ENCODE measurements at regions of chr3 and their contacts with region 1.

Region 1: DNA sequence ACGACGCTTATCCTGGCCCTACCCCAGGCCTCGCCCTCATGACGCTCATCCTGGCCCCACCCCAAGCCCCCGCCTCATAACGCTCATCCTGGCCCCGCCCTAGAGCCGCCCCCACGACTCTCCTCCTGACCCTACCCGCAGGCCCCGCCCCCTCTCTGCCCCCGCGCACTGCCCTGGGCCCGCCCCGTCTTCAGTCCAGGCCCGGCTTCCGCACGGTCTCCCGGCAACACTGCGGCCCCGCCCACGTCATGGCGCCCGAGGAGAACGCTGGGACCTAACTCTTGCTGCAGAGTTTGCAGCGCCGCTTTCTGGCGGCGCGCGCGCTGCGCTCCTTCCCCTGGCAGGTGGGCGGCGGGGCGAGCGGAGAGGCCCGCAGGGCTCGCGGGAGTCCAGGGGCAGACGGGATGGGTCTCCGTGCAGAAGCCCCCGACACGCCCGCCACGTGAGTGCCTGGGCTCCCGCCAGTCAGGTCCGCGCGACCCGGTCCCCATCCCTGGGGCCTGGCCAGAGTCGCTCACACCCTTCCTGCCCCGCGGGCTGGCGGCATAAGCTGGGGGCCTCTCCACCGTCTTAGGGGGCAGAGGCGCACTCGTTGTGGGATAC is 52.5 kb upstream of the ROPN1B start:
- DNase-seq: peak in 1 of 2 donors; percentile 99
- ATAC-seq: peak; percentile 95 to 100 (median 100)
- H3K4me3 ChIP-seq: peak overlapping the region; percentile 53 to 97 (median 80)
- H3K27ac ChIP-seq: peak overlapping the region in 9 of 10 donors; percentile 71 to 93 (median 86)
- H3K4me1 ChIP-seq: peaks cover 0 to 17% (median 8%) of the 10 kb centered on the region in 9 donors
- H3K27me3 ChIP-seq: no peaks in the 10 kb centered on the region
- CTCF ChIP-seq: peak in 5 of 9 donors; percentile 22 to 62 (median 32)

Region 2: GRCh38 chr3:125594581-125595011 is 321.9 kb before region 1 on chr3:
- intact Hi-C with region 1: loop called in 1 of 10 experiments (anchors 2 kb)
- DNase-seq: peak in 1 of 2 donors; percentile 24
- ATAC-seq: peak in 1 of 8 donors; percentile 8
- H3K4me3 ChIP-seq: peak overlapping the region; percentile 31 to 94 (median 77)
- H3K27ac ChIP-seq: peak overlapping the region; percentile 90 to 98 (median 96)
- H3K4me1 ChIP-seq: peaks cover 0 to 51% (median 35%) of the 10 kb centered on the region in 9 donors
- H3K27me3 ChIP-seq: no peaks in the 10 kb centered on the region
- CTCF ChIP-seq: no peak

Region 3: GRCh38 chr3:125767641-125768040 is 148.8 kb before region 1 on chr3:
- intact Hi-C with region 1: loop called in 1 of 10 experiments (anchors 10 kb)
- DNase-seq: no peak
- ATAC-seq: no peak
- H3K4me3 ChIP-seq: no peak overlapping the region
- H3K27ac ChIP-seq: no peak overlapping the region
- H3K4me1 ChIP-seq: peaks cover 0 to 6% (median 0%) of the 10 kb centered on the region in 9 donors
- H3K27me3 ChIP-seq: peaks cover 0 to 15% (median 8%) of the 10 kb centered on the region in 7 donors
- CTCF ChIP-seq: no peak

Measured in heart right ventricle (tissue), 16 donors.